Cardiac septum (tissue), 1 donor: ENCODE measurements at regions of chr18 and their contacts with region 1.

Region 1: GRCh38 chr18:41875094-41875780 is 79.8 kb upstream of the PIK3C3 start:
- DNase-seq: no peak

Region 2: DNA sequence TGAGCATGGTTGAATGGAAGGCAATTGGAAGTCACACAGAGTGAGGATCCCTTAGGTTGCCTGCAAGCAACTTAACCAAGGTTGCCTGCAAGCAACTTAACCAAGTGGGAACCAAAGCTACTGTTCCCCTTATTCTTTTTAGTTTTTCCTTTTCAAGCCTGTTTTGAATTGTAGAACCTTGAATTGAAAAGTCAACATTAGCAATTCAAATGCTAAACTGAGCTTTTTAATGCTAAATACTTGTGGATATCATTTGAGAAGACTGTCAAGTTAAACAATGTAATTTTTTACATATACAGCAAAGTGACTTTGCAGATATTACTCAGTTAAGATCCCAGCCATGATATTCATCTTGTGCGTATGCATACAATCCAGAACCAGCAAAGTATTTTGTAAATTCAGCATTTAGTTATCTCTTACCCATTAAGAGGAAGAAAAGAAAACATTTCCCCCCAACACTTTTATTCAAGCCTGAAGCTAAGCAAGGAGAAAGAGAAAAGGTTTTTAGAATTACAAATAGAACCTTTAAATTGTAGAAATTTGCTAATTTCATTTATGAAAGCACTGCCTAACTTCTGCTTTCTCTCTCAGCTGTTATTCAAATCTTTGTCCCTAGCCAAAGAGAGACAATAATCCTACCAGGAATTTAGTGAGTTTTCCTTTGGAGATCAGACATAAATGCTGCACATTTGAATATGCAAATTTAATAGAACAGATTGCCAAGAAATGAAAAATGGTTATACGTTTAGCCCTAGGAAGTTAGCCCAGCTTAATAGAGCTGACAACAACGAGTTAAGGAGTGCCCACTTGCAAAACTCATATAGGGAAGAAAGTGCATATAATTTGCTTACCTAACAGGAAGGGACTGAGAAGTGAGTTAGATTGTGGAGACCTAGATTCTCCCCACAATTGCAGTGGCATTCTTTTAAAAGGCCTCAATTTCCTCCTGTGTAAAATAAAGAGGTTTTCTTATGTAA is 563.4 kb before region 1 on chr18:
- intact Hi-C with region 1: loop called (anchors 10 kb)
- DNase-seq: no peak

Region 3: DNA sequence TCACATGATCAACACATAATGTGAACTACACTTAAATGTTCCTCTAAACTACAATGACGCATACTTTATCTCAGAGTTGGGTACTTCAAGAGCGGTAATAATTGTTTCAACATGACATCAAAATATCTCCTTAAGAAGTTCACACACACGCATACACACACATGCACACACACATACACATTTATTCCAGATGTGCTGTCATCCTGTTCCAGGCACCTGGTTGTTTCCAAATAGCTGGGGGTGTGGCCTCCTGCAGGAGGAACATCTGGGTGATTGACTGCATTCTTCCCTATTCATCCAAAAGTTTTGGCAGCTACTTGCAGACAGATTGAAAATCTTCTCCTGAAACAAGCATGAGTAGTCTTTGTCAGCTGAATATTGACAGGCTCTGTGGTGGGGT is 41.9 kb after region 1 on chr18:
- intact Hi-C with region 1: no loop called
- DNase-seq: no peak